Natural killer cell (primary cell): ENCODE measurements at regions of chr16 and their contacts with region 1.

Region 1: DNA sequence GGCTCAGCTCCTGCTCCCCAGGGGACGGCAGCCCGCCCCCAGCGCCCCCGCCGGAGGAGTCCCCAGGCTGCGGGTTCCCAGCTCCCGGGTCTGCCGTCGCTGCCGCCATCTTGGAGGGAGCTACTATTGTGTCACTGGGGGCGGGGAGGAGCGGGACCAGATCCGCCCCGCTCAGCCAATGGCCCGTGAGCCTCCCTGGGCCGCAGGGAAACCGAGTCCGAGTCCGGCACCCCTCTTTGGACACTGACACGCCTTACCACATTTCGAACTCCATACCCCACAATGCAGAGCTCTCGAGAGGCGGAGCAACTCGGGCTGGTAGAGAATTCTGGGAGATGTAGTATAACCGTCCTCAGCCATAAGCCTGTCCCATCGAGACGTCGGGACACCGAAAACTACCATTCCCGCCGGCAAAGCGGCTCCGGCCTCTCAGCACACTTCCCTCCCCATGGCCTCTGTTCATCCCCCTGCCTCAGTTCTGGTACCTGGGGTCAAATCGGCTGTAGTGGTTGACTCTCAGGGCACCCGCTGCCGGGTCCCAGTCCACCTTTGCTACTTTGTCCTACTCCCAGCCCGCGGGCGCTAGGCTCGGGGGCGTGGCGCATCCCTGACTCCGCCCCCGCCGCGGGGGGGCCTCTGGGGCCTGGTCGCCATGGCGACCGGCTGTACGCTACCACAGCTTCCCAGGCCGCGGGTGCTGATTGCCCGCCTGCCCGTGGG is at the starts of genes RANBP10 and TSNAXIP1:
- DNase-seq: peak; percentile 91 to 99
- ATAC-seq: peak; percentile 90 to 98 (median 91)
- H3K4me3 ChIP-seq: peak within 1 kb of the TSS; percentile 78
- H3K4me3 Mint-ChIP-seq: peak within 1 kb of the TSS; percentile 92
- H3K27ac ChIP-seq: peak within 1 kb of the TSS; percentile 62
- H3K27ac Mint-ChIP-seq: peak within 1 kb of the TSS; percentile 87 to 92
- H3K4me1 ChIP-seq: peaks cover 27% of the 10 kb centered on the region
- H3K4me1 Mint-ChIP-seq: peaks cover 18 to 31% of the 10 kb centered on the region in 2 donors
- H3K27me3 ChIP-seq: no peaks in the 10 kb centered on the region
- H3K27me3 Mint-ChIP-seq: no peaks in the 10 kb centered on the region
- CTCF ChIP-seq: no peak
- total RNA-seq, gene RANBP10: 20.9 to 25.8 (median 24.5) TPM
- total RNA-seq, gene TSNAXIP1: 0.15 to 0.68 TPM in 2 of 3 donors, not detected in the other

Region 2: GRCh38 chr16:67667817-67668494 is 138.6 kb before region 1 on chr16:
- intact Hi-C with region 1: loop called (anchors 5 kb)
- DNase-seq: peak; percentile 72 to 91
- ATAC-seq: peak; percentile 87 to 91 (median 87)
- H3K4me3 ChIP-seq: no peak overlapping the region
- H3K4me3 Mint-ChIP-seq: peak overlapping the region; percentile 35
- H3K27ac ChIP-seq: peak overlapping the region; percentile 50
- H3K27ac Mint-ChIP-seq: peak overlapping the region; percentile 16 to 90
- H3K4me1 ChIP-seq: peaks cover 32% of the 10 kb centered on the region
- H3K4me1 Mint-ChIP-seq: peaks cover 5 to 27% of the 10 kb centered on the region in 2 donors
- H3K27me3 ChIP-seq: no peaks in the 10 kb centered on the region
- H3K27me3 Mint-ChIP-seq: no peaks in the 10 kb centered on the region
- CTCF ChIP-seq: peak; percentile 75

Region 3: GRCh38 chr16:67719048-67719777 is 87.4 kb before region 1 on chr16 and contains the start of gene GFOD2:
- intact Hi-C with region 1: loop called (anchors 1 kb)
- DNase-seq: peak; percentile 97 to 99
- ATAC-seq: peak; percentile 94 to 97 (median 96)
- H3K4me3 ChIP-seq: peak within 1 kb of the TSS; percentile 62
- H3K4me3 Mint-ChIP-seq: peak within 1 kb of the TSS; percentile 95
- H3K27ac ChIP-seq: peak within 1 kb of the TSS; percentile 84
- H3K27ac Mint-ChIP-seq: peak within 1 kb of the TSS; percentile 92 to 99
- H3K4me1 ChIP-seq: peaks cover 15% of the 10 kb centered on the region
- H3K4me1 Mint-ChIP-seq: peaks cover 26 to 28% of the 10 kb centered on the region in 2 donors
- H3K27me3 ChIP-seq: no peaks in the 10 kb centered on the region
- H3K27me3 Mint-ChIP-seq: no peaks in the 10 kb centered on the region
- CTCF ChIP-seq: no peak
- total RNA-seq, gene GFOD2: 6.5 to 10.9 (median 8.3) TPM

Region 4: DNA sequence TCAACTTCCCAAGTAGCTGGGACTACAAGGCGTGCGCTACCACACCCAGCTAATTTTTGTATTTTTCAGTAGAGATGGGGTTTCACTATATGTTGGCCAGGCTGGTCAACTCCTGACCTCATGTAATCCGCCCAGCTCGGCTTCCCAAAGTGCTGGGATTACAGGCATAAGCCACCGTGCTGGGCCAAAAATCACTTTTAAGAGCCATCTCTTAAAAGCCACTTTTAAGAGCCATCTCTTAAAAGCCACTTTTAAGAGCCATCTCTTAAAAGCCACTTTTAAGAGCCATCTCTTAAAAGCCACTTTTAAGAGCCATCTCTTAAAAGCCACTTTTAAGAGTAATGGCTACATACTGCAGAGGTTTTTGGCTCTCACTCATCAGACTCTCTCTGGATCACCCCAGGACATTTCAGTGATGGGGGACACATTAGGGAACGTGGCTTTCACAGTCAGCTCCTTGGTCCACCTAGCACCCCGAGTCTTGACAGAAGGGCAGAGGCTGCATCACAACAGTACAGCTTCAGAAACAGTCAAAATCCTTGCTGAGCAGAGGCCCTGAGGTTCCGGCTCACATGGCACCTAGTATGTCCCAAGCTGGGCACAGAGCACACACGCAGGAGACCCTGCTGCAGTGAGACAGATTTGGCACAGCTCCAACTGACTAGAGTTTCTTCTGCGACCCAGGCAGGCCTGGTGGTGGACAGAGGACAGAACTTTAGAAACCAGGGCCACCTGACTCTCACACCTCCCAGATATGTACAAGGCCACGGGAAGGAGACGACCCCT is 23.8 kb before region 1 on chr16:
- intact Hi-C with region 1: no loop called
- DNase-seq: no peak
- ATAC-seq: no peak
- H3K4me3 ChIP-seq: no peak overlapping the region
- H3K4me3 Mint-ChIP-seq: no peak overlapping the region
- H3K27ac ChIP-seq: no peak overlapping the region
- H3K27ac Mint-ChIP-seq: no peak overlapping the region
- H3K4me1 ChIP-seq: peaks cover 15% of the 10 kb centered on the region
- H3K4me1 Mint-ChIP-seq: peaks cover 20 to 23% of the 10 kb centered on the region in 2 donors
- H3K27me3 ChIP-seq: no peaks in the 10 kb centered on the region
- H3K27me3 Mint-ChIP-seq: no peaks in the 10 kb centered on the region
- CTCF ChIP-seq: no peak

Region 5: DNA sequence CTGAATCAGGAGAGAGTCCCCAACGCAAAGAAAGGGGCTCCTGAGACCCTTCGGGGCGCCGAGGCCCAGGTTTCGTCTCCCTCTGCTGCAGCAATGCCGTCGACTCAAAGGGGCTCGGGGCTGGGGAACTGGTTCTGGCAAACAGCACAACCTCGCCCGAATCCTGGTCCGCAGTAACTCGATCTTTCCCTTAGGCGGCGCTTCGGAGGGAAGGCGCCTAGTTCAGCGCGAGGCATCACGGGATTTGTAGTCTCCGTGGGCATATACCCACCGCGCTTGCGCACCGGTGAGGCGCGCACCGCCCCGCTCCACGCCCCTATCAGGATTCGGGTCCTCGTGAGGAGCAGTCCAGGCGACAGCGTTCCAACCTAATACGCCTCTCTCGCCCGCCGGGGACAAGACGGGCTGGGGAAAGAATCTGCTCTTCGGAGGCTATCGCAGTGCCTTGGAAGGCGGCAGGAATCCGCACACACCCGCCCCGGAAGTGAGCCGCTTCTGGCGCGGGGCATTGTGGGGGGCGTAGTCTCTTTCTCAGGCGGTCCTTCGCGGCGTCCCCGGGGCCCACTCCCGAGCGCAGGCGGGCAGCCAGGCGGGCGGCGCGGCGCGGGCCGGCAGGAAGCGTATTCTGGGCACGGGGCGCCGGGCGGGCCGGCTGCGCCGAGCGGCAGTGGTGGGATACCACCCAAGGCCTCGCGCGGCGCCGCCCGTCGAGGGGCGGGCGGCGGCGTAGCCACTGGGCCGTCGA is 35.3 kb after region 1 on chr16 and contains the start of gene THAP11:
- intact Hi-C with region 1: loop called (anchors 1 kb)
- DNase-seq: peak; percentile 92 to 98
- ATAC-seq: peak; percentile 63 to 83 (median 67)
- H3K4me3 ChIP-seq: peak within 1 kb of the TSS; percentile 88
- H3K4me3 Mint-ChIP-seq: peak within 1 kb of the TSS; percentile 94
- H3K27ac ChIP-seq: peak within 1 kb of the TSS; percentile 96
- H3K27ac Mint-ChIP-seq: peak within 1 kb of the TSS; percentile 89 to 93
- H3K4me1 ChIP-seq: peaks cover 45% of the 10 kb centered on the region
- H3K4me1 Mint-ChIP-seq: peaks cover 33 to 34% of the 10 kb centered on the region in 2 donors
- H3K27me3 ChIP-seq: no peaks in the 10 kb centered on the region
- H3K27me3 Mint-ChIP-seq: no peaks in the 10 kb centered on the region
- CTCF ChIP-seq: peak; percentile 80
- total RNA-seq, gene THAP11: 25.5 to 35.8 (median 30.3) TPM

Region 6: GRCh38 chr16:67935402-67936123 is 129.0 kb after region 1 on chr16:
- intact Hi-C with region 1: loop called (anchors 5 kb)
- DNase-seq: peak; percentile 84 to 98
- ATAC-seq: peak; percentile 90 to 97 (median 93)
- H3K4me3 ChIP-seq: peak overlapping the region; percentile 100
- H3K4me3 Mint-ChIP-seq: peak overlapping the region; percentile 98
- H3K27ac ChIP-seq: peak overlapping the region; percentile 73
- H3K27ac Mint-ChIP-seq: peak overlapping the region; percentile 98
- H3K4me1 ChIP-seq: peaks cover 47% of the 10 kb centered on the region
- H3K4me1 Mint-ChIP-seq: peaks cover 37 to 45% of the 10 kb centered on the region in 2 donors
- H3K27me3 ChIP-seq: no peaks in the 10 kb centered on the region
- H3K27me3 Mint-ChIP-seq: no peaks in the 10 kb centered on the region
- CTCF ChIP-seq: no peak

Region 7: DNA sequence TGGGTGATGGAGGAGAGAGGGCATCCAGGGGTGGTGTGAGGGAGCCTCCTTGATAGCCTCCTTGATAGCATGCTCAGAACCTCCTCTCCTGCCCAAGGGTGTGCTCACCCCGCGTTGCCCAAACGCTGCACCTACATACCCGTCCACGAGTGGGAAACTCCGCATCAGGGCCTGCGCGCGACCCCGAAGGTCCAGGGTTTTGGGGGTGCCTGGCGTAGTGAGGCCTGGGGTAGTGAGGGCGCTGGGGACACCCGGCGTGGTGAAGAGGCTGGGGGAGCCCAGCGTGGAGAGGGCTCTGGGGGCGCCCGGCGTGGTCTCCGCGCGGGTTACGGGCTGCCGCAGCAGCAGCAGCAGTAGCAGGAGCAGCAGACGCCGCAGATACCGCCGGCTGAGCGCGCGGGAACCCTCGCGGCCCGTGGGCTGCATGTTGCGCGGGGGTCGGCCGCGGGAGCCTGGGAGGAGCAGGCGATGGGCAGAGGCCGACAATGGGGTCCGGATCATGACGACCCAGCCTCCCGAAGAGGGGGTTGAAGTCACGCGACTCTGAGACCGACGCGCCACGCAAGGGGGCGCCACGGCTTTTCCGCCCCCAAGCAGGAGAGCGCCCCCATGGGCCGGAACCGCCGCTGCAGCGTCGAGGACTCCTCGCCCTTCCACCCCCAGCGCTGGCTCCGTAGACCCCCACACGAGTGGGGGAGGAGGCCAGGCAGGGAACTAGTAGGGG is 173.5 kb after region 1 on chr16 and contains the start of gene DPEP3:
- intact Hi-C with region 1: no loop called
- DNase-seq: no peak
- ATAC-seq: no peak
- H3K4me3 ChIP-seq: no peak within 1 kb of the TSS
- H3K4me3 Mint-ChIP-seq: no peak within 1 kb of the TSS
- H3K27ac ChIP-seq: no peak within 1 kb of the TSS
- H3K27ac Mint-ChIP-seq: no peak within 1 kb of the TSS
- H3K4me1 ChIP-seq: peaks cover 21% of the 10 kb centered on the region
- H3K4me1 Mint-ChIP-seq: peaks cover 15% of the 10 kb centered on the region in 2 donors
- H3K27me3 ChIP-seq: no peaks in the 10 kb centered on the region
- H3K27me3 Mint-ChIP-seq: no peaks in the 10 kb centered on the region
- CTCF ChIP-seq: peak; percentile 15
- total RNA-seq, gene DPEP3: 0.53 to 1.00 (median 0.96) TPM

Region 8: GRCh38 chr16:68064791-68065365 is 258.3 kb after region 1 on chr16:
- intact Hi-C with region 1: loop called (anchors 10 kb)
- DNase-seq: peak; percentile 64 to 81
- ATAC-seq: peak; percentile 55 to 71 (median 55)
- H3K4me3 ChIP-seq: no peak overlapping the region
- H3K4me3 Mint-ChIP-seq: peak overlapping the region; percentile 45
- H3K27ac ChIP-seq: peak overlapping the region; percentile 47
- H3K27ac Mint-ChIP-seq: peak overlapping the region; percentile 82 to 92
- H3K4me1 ChIP-seq: peaks cover 85% of the 10 kb centered on the region
- H3K4me1 Mint-ChIP-seq: peaks cover 78 to 88% of the 10 kb centered on the region in 2 donors
- H3K27me3 ChIP-seq: no peaks in the 10 kb centered on the region
- H3K27me3 Mint-ChIP-seq: no peaks in the 10 kb centered on the region
- CTCF ChIP-seq: peak; percentile 83